ENCODE measurements at regions of chr1 and their contacts with region 1.

Region 1: GRCh38 chr1:154974063-154974807 is at the start of gene CKS1B:
- DNase-seq: peak; percentile 99
- H3K4me3 ChIP-seq: peak within 1 kb of the TSS; percentile 67 to 100
- H3K4me3 Mint-ChIP-seq: no peak within 1 kb of the TSS
- H3K27ac ChIP-seq: peak within 1 kb of the TSS; percentile 95
- H3K27ac Mint-ChIP-seq: no peak within 1 kb of the TSS
- H3K4me1 ChIP-seq: peaks cover 45% of the 10 kb centered on the region
- H3K4me1 Mint-ChIP-seq: peaks cover 22 to 39% (median 26%) of the 10 kb centered on the region in 4 donors
- H3K27me3 ChIP-seq: no peaks in the 10 kb centered on the region
- H3K27me3 Mint-ChIP-seq: no peaks in the 10 kb centered on the region
- total RNA-seq, gene CKS1B: 12.2 to 13.0 TPM

Region 2: GRCh38 chr1:154837672-154838171 is 136.5 kb before region 1 on chr1:
- CTCF ChIA-PET with region 1: no interaction called
- POLR2A ChIA-PET with region 1: no interaction called
- intact Hi-C with region 1: no loop called
- DNase-seq: no peak
- H3K4me3 ChIP-seq: no peak overlapping the region
- H3K4me3 Mint-ChIP-seq: no peak overlapping the region
- H3K27ac ChIP-seq: no peak overlapping the region
- H3K27ac Mint-ChIP-seq: no peak overlapping the region
- H3K4me1 ChIP-seq: no peaks in the 10 kb centered on the region
- H3K4me1 Mint-ChIP-seq: no peaks in the 10 kb centered on the region
- H3K27me3 ChIP-seq: no peaks in the 10 kb centered on the region
- H3K27me3 Mint-ChIP-seq: peaks cover 5% of the 10 kb centered on the region in 2 donors

Region 3: DNA sequence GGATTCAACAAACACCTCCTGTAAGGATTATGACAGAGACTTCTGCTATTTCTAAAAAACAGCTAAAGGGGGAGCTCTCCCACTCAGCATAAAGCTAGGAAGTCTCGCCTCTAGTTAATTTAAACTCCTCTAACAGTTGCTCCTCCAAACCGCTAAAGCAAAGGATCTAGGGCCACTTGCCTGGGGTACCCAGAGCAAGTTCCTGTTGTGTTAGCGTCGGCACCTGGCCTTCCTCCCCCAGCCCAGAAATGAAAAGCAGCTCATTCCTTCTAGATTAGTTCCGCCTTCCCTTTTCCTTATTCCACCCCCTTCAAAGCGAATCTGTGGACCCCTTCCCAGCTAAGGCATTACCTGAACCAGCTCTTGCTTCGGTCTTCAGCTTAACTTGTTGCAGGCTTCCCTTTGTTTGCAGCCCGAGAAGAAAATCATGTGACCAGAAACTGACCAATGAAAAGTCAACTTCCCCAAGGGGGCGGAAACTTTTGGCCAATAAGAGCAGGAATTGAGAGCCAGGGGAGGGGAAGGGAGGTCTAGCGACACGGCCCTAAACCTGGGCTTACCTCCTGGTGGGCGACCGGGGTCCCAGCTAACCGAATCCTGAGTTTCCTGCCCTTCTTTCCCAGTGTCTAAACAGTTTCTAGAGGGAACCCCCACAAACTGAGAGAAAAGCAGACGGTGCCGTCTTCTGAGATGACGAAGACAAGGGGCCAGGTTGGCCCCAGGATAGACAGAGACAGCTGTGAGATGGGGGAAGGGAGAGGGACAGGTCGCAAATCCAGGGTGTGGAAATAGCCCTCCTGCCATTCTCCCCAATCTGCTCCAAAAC is 18.3 kb before region 1 on chr1 and contains the start of gene PBXIP1:
- CTCF ChIA-PET with region 1: interaction called, 40 read pairs
- POLR2A ChIA-PET with region 1: interaction called, 219 read pairs
- intact Hi-C with region 1: loop called (anchors 1 kb)
- DNase-seq: peak; percentile 92 to 94 (median 92)
- H3K4me3 ChIP-seq: peak within 1 kb of the TSS; percentile 80 to 90
- H3K4me3 Mint-ChIP-seq: peak within 1 kb of the TSS; percentile 94 to 100 (median 98)
- H3K27ac ChIP-seq: peak within 1 kb of the TSS; percentile 100
- H3K27ac Mint-ChIP-seq: peak within 1 kb of the TSS; percentile 98 to 100 (median 100)
- H3K4me1 ChIP-seq: peaks cover 75% of the 10 kb centered on the region
- H3K4me1 Mint-ChIP-seq: peaks cover 43 to 87% (median 74%) of the 10 kb centered on the region in 4 donors
- H3K27me3 ChIP-seq: no peaks in the 10 kb centered on the region
- H3K27me3 Mint-ChIP-seq: no peaks in the 10 kb centered on the region
- total RNA-seq, gene PBXIP1: 435 to 438 TPM

Region 4: GRCh38 chr1:154961497-154962262 is 12.6 kb before region 1 on chr1 and contains the start of gene PYGO2:
- CTCF ChIA-PET with region 1: interaction called, 40 read pairs
- POLR2A ChIA-PET with region 1: interaction called, 219 read pairs
- intact Hi-C with region 1: loop called (anchors 1 kb)
- DNase-seq: peak; percentile 81 to 88 (median 82)
- H3K4me3 ChIP-seq: peak within 1 kb of the TSS; percentile 63 to 65
- H3K4me3 Mint-ChIP-seq: peak within 1 kb of the TSS; percentile 94 to 98 (median 97)
- H3K27ac ChIP-seq: peak within 1 kb of the TSS; percentile 84
- H3K27ac Mint-ChIP-seq: peak within 1 kb of the TSS; percentile 97 to 99 (median 98)
- H3K4me1 ChIP-seq: peaks cover 43% of the 10 kb centered on the region
- H3K4me1 Mint-ChIP-seq: peaks cover 21 to 57% (median 37%) of the 10 kb centered on the region in 4 donors
- H3K27me3 ChIP-seq: no peaks in the 10 kb centered on the region
- H3K27me3 Mint-ChIP-seq: no peaks in the 10 kb centered on the region
- total RNA-seq, gene PYGO2: 78.4 to 80.2 TPM

Measured in CD4-positive, alpha-beta memory T cell (primary cell).